ENCODE measurements at regions of chr18 and their contacts with region 1.

Region 1: DNA sequence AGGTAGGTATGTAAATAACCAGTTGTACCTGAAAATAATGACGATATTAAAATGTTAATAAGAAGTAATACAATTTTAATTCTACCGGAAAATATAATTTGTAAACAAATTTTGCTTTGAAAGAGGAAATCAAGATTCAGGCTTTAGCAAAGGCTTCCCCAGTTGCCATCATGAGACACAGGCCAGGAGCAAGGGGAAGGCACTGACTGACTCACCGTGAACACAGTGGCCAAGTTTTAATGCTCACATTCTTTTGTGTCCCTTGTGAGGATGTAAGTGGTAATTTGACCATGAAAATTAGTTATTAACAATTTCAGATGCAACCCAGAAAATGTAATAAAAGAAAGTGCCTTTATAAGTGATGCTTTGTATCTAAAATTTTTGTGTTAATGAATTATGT is 164.1 kb downstream of the GREB1L start:
- ATAC-seq: no peak
- H3K4me3 ChIP-seq: no peak overlapping the region
- H3K27ac ChIP-seq: no peak overlapping the region
- H3K4me1 ChIP-seq: no peaks in the 10 kb centered on the region

Region 2: DNA sequence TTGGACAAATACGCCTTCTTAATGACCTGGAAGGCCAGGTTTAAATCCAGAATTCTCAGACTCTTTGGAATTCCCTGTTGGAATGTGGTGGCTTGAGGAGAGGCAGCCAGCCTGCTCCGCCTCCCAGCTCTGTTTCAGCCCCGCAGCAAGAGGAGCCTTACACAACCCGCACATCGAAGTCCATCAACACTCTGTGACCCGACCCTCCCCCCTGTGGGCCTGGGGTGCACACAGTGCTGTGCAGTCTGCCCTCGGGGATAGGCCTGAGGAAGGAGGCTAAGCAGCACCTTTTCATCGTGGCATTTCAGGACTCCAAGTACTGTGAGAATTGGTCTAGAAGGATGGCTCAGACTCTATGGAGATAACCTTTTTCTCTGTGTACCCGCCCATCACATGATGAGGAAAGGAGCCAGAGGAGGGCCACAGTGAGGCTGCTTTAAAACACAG is 90.3 kb before region 1 on chr18:
- in situ Hi-C with region 1: loop called in 2 of 9 experiments (anchors 25 kb)
- ATAC-seq: peak in 7 of 8 experiments; percentile 52 to 93 (median 70)
- H3K4me3 ChIP-seq: no peak overlapping the region
- H3K27ac ChIP-seq: no peak overlapping the region
- H3K4me1 ChIP-seq: peaks cover 6 to 11% of the 10 kb centered on the region in 2 donors

Region 3: DNA sequence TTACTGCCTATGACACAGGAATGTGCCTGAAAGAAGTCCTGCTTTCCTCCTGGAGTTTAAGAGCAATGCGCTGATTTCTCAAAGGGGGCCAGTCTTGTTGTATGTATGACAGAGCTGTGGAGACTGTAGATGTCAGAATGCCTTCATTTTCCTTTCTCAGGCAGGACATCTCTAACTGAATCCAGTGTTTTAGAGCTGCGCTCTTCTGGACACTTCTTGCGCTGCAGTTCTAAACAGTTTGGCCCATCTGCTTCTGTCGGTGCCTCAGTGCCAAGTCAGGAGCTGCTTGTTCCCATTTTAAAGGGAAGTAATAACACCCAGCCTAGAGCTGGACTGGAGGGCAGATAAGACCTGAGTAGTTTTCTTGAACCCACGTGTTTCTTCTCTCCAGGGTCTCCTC is 103.0 kb after region 1 on chr18:
- in situ Hi-C with region 1: loop called in 1 of 9 experiments (anchors 25 kb)
- ATAC-seq: peak in 1 of 8 experiments; percentile 17
- H3K4me3 ChIP-seq: no peak overlapping the region
- H3K27ac ChIP-seq: no peak overlapping the region
- H3K4me1 ChIP-seq: no peaks in the 10 kb centered on the region